Ascending aorta (tissue), 2 donors: ENCODE measurements at regions of chr12 and their contacts with region 1.

Region 1: GRCh38 chr12:45324391-45324790 is 108.5 kb downstream of the ANO6 start:
- DNase-seq: no peak
- H3K4me3 ChIP-seq: no peak overlapping the region
- H3K27ac ChIP-seq: peak overlapping the region; percentile 8 to 47
- H3K4me1 ChIP-seq: peaks cover 2 to 24% of the 10 kb centered on the region in 2 donors
- H3K27me3 ChIP-seq: no peaks in the 10 kb centered on the region
- CTCF ChIP-seq: no peak

Region 2: DNA sequence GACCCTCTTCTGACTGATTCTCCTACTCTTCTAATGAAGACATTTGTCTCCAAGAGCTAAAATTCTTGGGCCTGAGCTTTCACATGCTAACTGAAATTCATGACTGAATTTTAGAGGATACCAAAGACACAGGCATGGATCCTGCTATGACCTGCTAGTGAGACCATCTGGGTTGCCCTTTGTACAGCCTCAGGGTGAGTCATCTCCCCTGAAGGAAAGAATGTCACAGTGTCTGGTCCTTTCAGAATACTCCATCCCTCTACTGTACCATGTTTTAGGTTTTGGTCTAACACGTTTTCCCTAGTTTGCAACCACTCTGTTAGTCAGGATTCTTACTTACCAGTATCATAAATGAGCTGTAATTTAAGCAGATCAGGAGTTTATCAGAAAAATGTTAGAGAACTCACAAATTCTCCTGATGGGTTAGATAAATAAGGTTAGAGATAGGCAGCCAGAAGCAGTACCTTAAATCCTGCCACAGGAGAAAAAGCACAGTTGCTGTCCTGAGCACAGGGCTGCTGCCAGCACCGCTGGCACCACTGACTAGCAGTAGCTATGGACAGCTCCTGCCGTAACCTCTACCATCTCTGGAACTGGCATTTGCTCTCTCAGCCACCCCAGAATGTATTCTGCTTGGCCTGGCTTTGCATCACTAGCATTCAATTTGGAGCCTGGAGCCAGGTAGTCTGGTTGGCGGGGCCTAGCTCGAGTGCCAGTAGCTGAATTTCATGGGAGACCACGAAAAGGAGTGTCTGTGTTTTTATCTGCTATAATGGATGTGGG is 19.1 kb after region 1 on chr12:
- intact Hi-C with region 1: loop called (anchors 2 kb)
- DNase-seq: no peak
- H3K4me3 ChIP-seq: no peak overlapping the region
- H3K27ac ChIP-seq: no peak overlapping the region
- H3K4me1 ChIP-seq: peaks cover 4 to 14% of the 10 kb centered on the region in 2 donors
- H3K27me3 ChIP-seq: no peaks in the 10 kb centered on the region
- CTCF ChIP-seq: no peak